CD4-positive, alpha-beta T cell (primary cell): ENCODE measurements at regions of chr16 and their contacts with region 1.

Region 1: GRCh38 chr16:1782352-1783091 is at the starts of genes NUBP2 and SPSB3:
- DNase-seq: peak; percentile 93 to 100 (median 97)
- ATAC-seq: peak; percentile 84
- H3K4me3 ChIP-seq: peak within 1 kb of the TSS; percentile 88
- H3K4me3 Mint-ChIP-seq: peak within 1 kb of the TSS; percentile 95
- H3K27ac ChIP-seq: peak within 1 kb of the TSS; percentile 69 to 74
- H3K27ac Mint-ChIP-seq: peak within 1 kb of the TSS; percentile 96
- H3K4me1 ChIP-seq: peaks cover 61% of the 10 kb centered on the region
- H3K4me1 Mint-ChIP-seq: peaks cover 26% of the 10 kb centered on the region
- H3K27me3 ChIP-seq: no peaks in the 10 kb centered on the region
- H3K27me3 Mint-ChIP-seq: no peaks in the 10 kb centered on the region
- CTCF ChIP-seq: no peak
- total RNA-seq, gene NUBP2: 36.4 to 38.1 TPM
- total RNA-seq, gene SPSB3: 86.3 to 87.6 TPM

Region 2: DNA sequence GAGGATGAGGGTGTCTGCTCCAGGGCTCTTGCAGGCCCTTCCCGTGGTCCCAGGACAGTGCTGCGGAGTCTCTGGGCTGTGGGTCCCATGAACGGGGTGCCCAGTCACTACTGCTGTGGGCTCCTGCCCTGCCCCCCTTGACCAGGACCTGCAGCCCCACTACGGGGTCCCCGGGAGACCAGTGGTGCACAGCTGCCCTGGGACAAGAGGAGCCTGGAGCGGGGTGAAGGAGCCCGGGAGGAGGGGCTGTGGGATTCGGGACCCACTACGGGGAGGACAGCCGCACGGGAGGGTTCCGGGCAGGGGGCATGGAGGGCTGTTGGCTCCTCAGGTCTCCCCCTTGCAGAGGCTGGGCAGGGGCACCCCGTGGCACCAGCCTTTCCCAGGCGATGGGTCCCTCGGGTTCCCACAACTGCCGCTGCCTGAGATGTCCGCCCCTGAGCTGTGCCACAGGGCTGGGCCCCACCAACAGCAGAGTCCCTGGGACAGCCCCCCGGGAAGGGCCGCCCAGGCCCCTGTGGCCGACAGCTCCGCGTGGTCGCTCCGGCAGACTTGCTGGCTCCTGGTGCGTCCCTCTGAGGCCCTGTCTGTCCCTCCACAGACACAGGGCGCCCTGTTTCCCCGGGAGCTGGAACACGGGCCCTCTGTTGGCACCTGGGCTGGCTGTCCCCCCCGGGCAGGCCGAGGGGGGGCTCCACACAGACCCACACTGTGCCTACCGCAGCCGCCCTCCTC is 929.9 kb before region 1 on chr16:
- CTCF ChIA-PET with region 1: no interaction called
- POLR2A ChIA-PET with region 1: no interaction called
- intact Hi-C with region 1: no loop called
- DNase-seq: no peak
- ATAC-seq: no peak
- H3K4me3 ChIP-seq: no peak overlapping the region
- H3K4me3 Mint-ChIP-seq: no peak overlapping the region
- H3K27ac ChIP-seq: no peak overlapping the region
- H3K27ac Mint-ChIP-seq: no peak overlapping the region
- H3K4me1 ChIP-seq: no peaks in the 10 kb centered on the region
- H3K4me1 Mint-ChIP-seq: no peaks in the 10 kb centered on the region
- H3K27me3 ChIP-seq: no peaks in the 10 kb centered on the region
- H3K27me3 Mint-ChIP-seq: no peaks in the 10 kb centered on the region
- CTCF ChIP-seq: no peak

Region 3: DNA sequence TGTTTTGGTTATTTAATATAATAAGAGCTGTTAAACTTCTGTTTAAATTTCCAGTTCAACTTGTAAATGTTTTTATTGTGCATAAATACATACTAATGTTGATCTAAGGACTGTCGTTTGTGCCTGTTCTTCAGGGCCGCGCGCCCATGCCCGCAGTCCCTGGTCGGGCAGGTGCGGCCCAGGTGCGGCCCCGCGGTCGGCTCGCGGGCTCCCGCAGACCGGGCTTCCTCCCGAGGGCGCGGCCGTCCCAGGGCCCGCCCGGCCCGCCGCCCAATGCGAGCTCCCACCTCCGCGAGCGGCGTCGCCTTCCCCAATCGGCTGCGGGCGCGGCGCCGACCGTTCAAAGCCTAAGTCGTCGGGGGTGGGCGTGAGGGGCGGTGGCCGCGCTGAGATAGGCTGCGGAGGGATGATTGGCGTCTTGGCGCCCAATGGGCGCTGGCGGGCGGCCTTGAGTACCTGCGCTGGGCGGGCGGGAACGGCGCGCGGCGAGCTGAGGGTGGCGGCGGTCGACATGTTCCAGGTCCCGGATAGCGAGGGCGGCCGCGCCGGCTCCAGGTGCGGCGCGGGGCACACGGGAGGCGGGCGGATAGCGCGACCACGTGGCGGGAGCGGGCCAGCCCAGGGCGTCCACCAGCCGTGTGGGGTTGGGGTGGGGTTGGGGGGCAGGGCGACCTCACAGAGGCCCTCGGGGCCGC is 104.6 kb before region 1 on chr16 and contains the start of gene JPT2:
- CTCF ChIA-PET with region 1: no interaction called
- POLR2A ChIA-PET with region 1: interaction called, 15 read pairs
- intact Hi-C with region 1: no loop called
- DNase-seq: peak; percentile 90 to 98 (median 95)
- ATAC-seq: peak; percentile 97
- H3K4me3 ChIP-seq: peak within 1 kb of the TSS; percentile 66
- H3K4me3 Mint-ChIP-seq: peak within 1 kb of the TSS; percentile 93
- H3K27ac ChIP-seq: peak within 1 kb of the TSS in 1 of 2 donors; percentile 61
- H3K27ac Mint-ChIP-seq: peak within 1 kb of the TSS; percentile 71
- H3K4me1 ChIP-seq: peaks cover 25% of the 10 kb centered on the region
- H3K4me1 Mint-ChIP-seq: peaks cover 31% of the 10 kb centered on the region
- H3K27me3 ChIP-seq: no peaks in the 10 kb centered on the region
- H3K27me3 Mint-ChIP-seq: no peaks in the 10 kb centered on the region
- CTCF ChIP-seq: no peak
- total RNA-seq, gene JPT2: 2.5 to 3.2 TPM

Region 4: DNA sequence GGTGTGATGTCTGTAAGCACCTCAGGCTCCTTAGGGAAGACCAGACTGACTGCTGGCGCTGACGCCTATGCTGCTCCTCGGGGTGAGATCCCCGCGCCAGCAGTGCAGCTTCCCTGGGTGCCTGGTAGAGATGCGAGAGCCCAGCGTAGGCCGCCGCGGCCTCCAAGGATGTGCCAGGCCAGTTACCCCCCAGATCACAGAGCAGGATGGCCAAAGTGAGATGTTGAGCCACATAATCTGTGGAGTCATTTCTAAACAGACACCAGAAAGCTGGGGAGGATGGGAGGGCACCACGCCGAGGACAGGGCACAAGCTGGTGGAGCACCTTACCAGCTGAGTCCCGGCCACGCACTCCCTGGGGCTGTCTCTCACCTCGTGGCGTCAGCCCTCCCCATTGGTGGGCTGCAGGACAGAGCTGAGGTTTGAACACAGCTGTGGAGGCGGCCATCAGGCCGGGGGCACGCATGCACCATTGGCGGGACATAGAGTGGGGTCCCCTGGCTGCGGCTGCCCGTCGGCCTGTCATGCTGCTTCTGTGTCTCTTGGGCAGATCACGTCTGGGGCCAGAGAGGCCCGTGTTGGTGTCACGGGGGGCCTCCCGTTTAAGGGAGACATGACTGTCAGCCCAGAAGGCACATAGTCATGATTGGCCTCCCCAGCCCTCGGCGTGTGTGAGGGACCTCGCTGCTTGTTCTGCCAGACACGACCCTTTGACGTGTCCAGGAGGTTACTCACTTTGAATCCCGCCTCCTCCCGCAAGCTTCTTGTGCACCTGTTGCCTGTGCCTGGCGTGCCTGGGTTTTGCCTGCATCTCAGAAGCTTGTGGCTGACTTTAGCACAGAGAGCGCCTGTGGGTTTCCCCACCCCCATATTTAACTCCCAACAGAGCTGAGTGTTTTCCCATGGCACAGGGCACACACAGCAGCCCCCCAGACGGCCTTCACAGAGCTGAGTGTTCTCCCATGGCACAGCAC is 54.6 kb before region 1 on chr16:
- CTCF ChIA-PET with region 1: no interaction called
- POLR2A ChIA-PET with region 1: no interaction called
- intact Hi-C with region 1: no loop called
- DNase-seq: no peak
- ATAC-seq: no peak
- H3K4me3 ChIP-seq: no peak overlapping the region
- H3K4me3 Mint-ChIP-seq: no peak overlapping the region
- H3K27ac ChIP-seq: no peak overlapping the region
- H3K27ac Mint-ChIP-seq: no peak overlapping the region
- H3K4me1 ChIP-seq: peaks cover 17% of the 10 kb centered on the region
- H3K4me1 Mint-ChIP-seq: peaks cover 19% of the 10 kb centered on the region
- H3K27me3 ChIP-seq: no peaks in the 10 kb centered on the region
- H3K27me3 Mint-ChIP-seq: no peaks in the 10 kb centered on the region
- CTCF ChIP-seq: no peak

Region 5: GRCh38 chr16:1757714-1758404 is 24.7 kb before region 1 on chr16:
- CTCF ChIA-PET with region 1: no interaction called
- POLR2A ChIA-PET with region 1: no interaction called
- intact Hi-C with region 1: no loop called
- DNase-seq: no peak
- ATAC-seq: no peak
- H3K4me3 ChIP-seq: no peak overlapping the region
- H3K4me3 Mint-ChIP-seq: no peak overlapping the region
- H3K27ac ChIP-seq: no peak overlapping the region
- H3K27ac Mint-ChIP-seq: no peak overlapping the region
- H3K4me1 ChIP-seq: peaks cover 17% of the 10 kb centered on the region
- H3K4me1 Mint-ChIP-seq: peaks cover 10% of the 10 kb centered on the region
- H3K27me3 ChIP-seq: no peaks in the 10 kb centered on the region
- H3K27me3 Mint-ChIP-seq: no peaks in the 10 kb centered on the region
- CTCF ChIP-seq: no peak

Region 6: DNA sequence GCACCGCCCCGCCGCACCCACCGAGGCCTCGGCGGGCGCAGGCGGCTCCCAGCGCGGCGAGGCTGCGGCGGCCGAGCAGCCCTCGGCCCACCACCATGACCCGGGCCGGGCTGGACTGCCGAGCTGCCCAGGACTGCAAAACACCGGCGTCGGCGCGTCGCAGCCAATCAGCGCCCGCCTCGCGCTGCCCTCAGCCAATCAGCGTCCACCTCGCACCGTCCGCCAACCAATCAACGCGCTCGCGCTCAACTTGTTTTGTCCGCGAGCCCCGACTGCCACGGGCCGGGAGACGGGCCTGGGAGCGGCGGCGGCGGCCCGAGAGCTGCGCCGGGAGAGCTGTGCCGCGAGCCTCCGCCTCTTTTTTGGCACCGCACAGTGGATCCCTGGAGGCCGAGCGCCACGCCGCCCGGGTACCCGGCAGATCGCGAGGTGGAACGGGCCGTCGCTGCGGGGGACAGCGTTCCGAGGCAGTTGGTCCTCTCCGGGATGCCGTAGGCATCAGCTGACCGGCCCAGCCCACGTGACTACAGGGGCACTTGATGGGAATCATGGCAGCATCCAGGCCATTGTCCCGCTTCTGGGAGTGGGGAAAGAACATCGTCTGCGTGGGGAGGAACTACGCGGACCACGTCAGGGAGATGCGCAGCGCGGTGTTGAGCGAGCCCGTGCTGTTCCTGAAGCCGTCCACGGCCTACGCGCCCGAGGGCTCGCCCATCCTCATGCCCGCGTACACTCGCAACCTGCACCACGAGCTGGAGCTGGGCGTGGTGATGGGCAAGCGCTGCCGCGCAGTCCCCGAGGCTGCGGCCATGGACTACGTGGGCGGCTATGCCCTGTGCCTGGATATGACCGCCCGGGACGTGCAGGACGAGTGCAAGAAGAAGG is 44.4 kb after region 1 on chr16 and contains the starts of genes FAHD1 and HAGH:
- CTCF ChIA-PET with region 1: interaction called, 3 read pairs
- POLR2A ChIA-PET with region 1: interaction called, 51 read pairs
- intact Hi-C with region 1: loop called in 1 of 2 experiments (anchors 2 kb)
- DNase-seq: peak; percentile 82 to 97 (median 88)
- ATAC-seq: peak; percentile 82
- H3K4me3 ChIP-seq: peak within 1 kb of the TSS; percentile 76
- H3K4me3 Mint-ChIP-seq: peak within 1 kb of the TSS; percentile 91
- H3K27ac ChIP-seq: peak within 1 kb of the TSS; percentile 72 to 77
- H3K27ac Mint-ChIP-seq: peak within 1 kb of the TSS; percentile 90
- H3K4me1 ChIP-seq: peaks cover 51% of the 10 kb centered on the region
- H3K4me1 Mint-ChIP-seq: peaks cover 37% of the 10 kb centered on the region
- H3K27me3 ChIP-seq: no peaks in the 10 kb centered on the region
- H3K27me3 Mint-ChIP-seq: no peaks in the 10 kb centered on the region
- CTCF ChIP-seq: no peak
- total RNA-seq, gene FAHD1: 4.1 to 4.5 TPM
- total RNA-seq, gene HAGH: 20.9 to 22.7 TPM

Region 7: GRCh38 chr16:1964506-1965395 is 182.2 kb after region 1 on chr16 and contains the start of gene RPS2:
- CTCF ChIA-PET with region 1: no interaction called
- POLR2A ChIA-PET with region 1: interaction called, 36 read pairs
- intact Hi-C with region 1: no loop called
- DNase-seq: peak; percentile 96 to 100 (median 98)
- ATAC-seq: peak; percentile 89
- H3K4me3 ChIP-seq: peak within 1 kb of the TSS; percentile 91
- H3K4me3 Mint-ChIP-seq: peak within 1 kb of the TSS; percentile 98
- H3K27ac ChIP-seq: peak within 1 kb of the TSS; percentile 96 to 99
- H3K27ac Mint-ChIP-seq: peak within 1 kb of the TSS; percentile 98
- H3K4me1 ChIP-seq: peaks cover 58% of the 10 kb centered on the region
- H3K4me1 Mint-ChIP-seq: peaks cover 50% of the 10 kb centered on the region
- H3K27me3 ChIP-seq: no peaks in the 10 kb centered on the region
- H3K27me3 Mint-ChIP-seq: no peaks in the 10 kb centered on the region
- CTCF ChIP-seq: no peak
- total RNA-seq, gene RPS2: 3,604 to 3,755 TPM